CD4-positive, alpha-beta T cell (primary cell): ENCODE measurements at regions of chr1 and their contacts with region 1.

Region 1: GRCh38 chr1:183609313-183609712 is 19.1 kb upstream of the NCF2 start:
- DNase-seq: peak in 3 of 14 experiments; percentile 18 to 66 (median 53)
- ATAC-seq: no peak
- H3K4me3 ChIP-seq: no peak overlapping the region
- H3K4me3 Mint-ChIP-seq: no peak overlapping the region
- H3K27ac ChIP-seq: no peak overlapping the region
- H3K27ac Mint-ChIP-seq: no peak overlapping the region
- H3K4me1 ChIP-seq: no peaks in the 10 kb centered on the region
- H3K4me1 Mint-ChIP-seq: no peaks in the 10 kb centered on the region
- H3K27me3 ChIP-seq: no peaks in the 10 kb centered on the region
- H3K27me3 Mint-ChIP-seq: peaks cover 8% of the 10 kb centered on the region
- CTCF ChIP-seq: no peak

Region 2: DNA sequence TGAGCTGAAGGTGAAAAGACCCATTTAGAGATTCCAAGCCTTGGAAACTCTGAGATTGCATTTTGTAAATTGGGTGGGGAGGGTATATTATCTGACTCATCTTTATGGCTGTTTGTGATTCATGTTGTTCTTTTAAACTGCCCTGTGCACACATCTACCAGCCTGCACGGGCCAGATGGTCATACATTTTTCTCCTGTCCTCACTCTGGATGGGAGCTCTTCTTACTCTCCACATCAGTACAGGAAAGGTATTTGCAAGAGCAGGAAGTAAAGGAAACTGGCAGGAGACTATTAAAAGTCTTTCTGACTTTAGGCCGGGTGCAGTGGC is 176.8 kb before region 1 on chr1:
- CTCF ChIA-PET with region 1: no interaction called
- POLR2A ChIA-PET with region 1: no interaction called
- intact Hi-C with region 1: no loop called
- DNase-seq: no peak
- ATAC-seq: no peak
- H3K4me3 ChIP-seq: no peak overlapping the region
- H3K4me3 Mint-ChIP-seq: no peak overlapping the region
- H3K27ac ChIP-seq: no peak overlapping the region
- H3K27ac Mint-ChIP-seq: no peak overlapping the region
- H3K4me1 ChIP-seq: no peaks in the 10 kb centered on the region
- H3K4me1 Mint-ChIP-seq: no peaks in the 10 kb centered on the region
- H3K27me3 ChIP-seq: no peaks in the 10 kb centered on the region
- H3K27me3 Mint-ChIP-seq: peaks cover 39% of the 10 kb centered on the region
- CTCF ChIP-seq: no peak

Region 3: DNA sequence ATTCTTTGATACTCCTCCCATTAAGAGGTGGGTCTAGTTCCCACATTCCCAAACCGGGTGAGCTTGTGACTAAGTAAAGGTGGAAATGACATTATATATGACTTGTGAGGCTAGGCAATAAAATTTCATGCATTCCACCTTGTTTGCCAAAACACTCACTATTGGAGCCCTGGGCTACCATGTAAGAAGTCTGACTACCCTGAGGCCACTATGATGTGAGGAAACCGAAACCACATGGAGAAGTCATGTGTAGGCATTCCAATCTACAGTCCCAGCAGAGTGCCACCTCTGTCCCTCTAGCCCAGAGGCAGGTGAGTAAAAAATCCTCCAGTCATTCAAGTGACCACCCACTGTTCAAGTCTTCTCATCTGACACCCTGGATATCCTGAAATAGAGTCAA is 154.9 kb before region 1 on chr1:
- CTCF ChIA-PET with region 1: no interaction called
- POLR2A ChIA-PET with region 1: no interaction called
- intact Hi-C with region 1: loop called in 1 of 2 experiments (anchors 5 kb)
- DNase-seq: no peak
- ATAC-seq: no peak
- H3K4me3 ChIP-seq: no peak overlapping the region
- H3K4me3 Mint-ChIP-seq: no peak overlapping the region
- H3K27ac ChIP-seq: no peak overlapping the region
- H3K27ac Mint-ChIP-seq: no peak overlapping the region
- H3K4me1 ChIP-seq: no peaks in the 10 kb centered on the region
- H3K4me1 Mint-ChIP-seq: no peaks in the 10 kb centered on the region
- H3K27me3 ChIP-seq: peaks cover 3 to 15% of the 10 kb centered on the region in 2 experiments
- H3K27me3 Mint-ChIP-seq: peaks cover 43% of the 10 kb centered on the region
- CTCF ChIP-seq: no peak

Region 4: GRCh38 chr1:183646776-183647175 is 37.5 kb after region 1 on chr1:
- CTCF ChIA-PET with region 1: no interaction called
- POLR2A ChIA-PET with region 1: no interaction called
- intact Hi-C with region 1: no loop called
- DNase-seq: no peak
- ATAC-seq: no peak
- H3K4me3 ChIP-seq: no peak overlapping the region
- H3K4me3 Mint-ChIP-seq: no peak overlapping the region
- H3K27ac ChIP-seq: no peak overlapping the region
- H3K27ac Mint-ChIP-seq: no peak overlapping the region
- H3K4me1 ChIP-seq: peaks cover 6% of the 10 kb centered on the region
- H3K4me1 Mint-ChIP-seq: peaks cover 7% of the 10 kb centered on the region
- H3K27me3 ChIP-seq: no peaks in the 10 kb centered on the region
- H3K27me3 Mint-ChIP-seq: no peaks in the 10 kb centered on the region
- CTCF ChIP-seq: no peak